ENCODE measurements at regions of chr9 and their contacts with region 1.

Region 1: GRCh38 chr9:113401027-113401792 is at the start of gene ALAD:
- DNase-seq: peak; percentile 99
- ATAC-seq: peak; percentile 99
- H3K4me3 Mint-ChIP-seq: peak within 1 kb of the TSS; percentile 96
- H3K27ac Mint-ChIP-seq: peak within 1 kb of the TSS; percentile 87
- H3K4me1 Mint-ChIP-seq: peaks cover 17% of the 10 kb centered on the region
- H3K27me3 Mint-ChIP-seq: no peaks in the 10 kb centered on the region
- CTCF ChIP-seq: no peak
- total RNA-seq, gene ALAD: 24.0 and 24.3 TPM in 2 replicates

Region 2: DNA sequence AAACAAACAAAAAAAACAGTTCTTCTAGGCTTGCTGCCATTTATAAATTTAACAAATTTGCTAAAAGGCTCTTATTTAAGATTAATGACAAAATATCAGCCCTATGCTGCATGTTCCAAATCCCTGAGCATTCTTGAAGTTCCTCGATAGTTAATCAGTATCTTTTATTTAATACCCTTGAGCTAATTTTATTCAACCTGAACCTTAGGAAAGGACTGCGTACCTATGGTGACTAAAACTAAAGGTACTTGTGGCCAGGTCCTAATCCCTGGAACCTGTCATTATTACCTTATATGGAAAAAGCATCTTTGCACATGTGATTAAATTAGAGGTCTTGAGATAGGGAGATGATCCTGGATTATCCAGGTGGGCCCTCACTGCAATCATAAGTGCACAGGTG is 672.8 kb before region 1 on chr9:
- CTCF ChIA-PET with region 1: no interaction called
- POLR2A ChIA-PET with region 1: interaction called, 11 read pairs
- intact Hi-C with region 1: no loop called
- DNase-seq: no peak
- ATAC-seq: no peak
- H3K4me3 Mint-ChIP-seq: no peak overlapping the region
- H3K27ac Mint-ChIP-seq: no peak overlapping the region
- H3K4me1 Mint-ChIP-seq: peaks cover 22% of the 10 kb centered on the region
- H3K27me3 Mint-ChIP-seq: no peaks in the 10 kb centered on the region
- CTCF ChIP-seq: no peak

Region 3: GRCh38 chr9:112945620-112946208 is 455.5 kb before region 1 on chr9:
- CTCF ChIA-PET with region 1: no interaction called
- POLR2A ChIA-PET with region 1: no interaction called
- intact Hi-C with region 1: no loop called
- DNase-seq: no peak
- ATAC-seq: no peak
- H3K4me3 Mint-ChIP-seq: no peak overlapping the region
- H3K27ac Mint-ChIP-seq: no peak overlapping the region
- H3K4me1 Mint-ChIP-seq: no peaks in the 10 kb centered on the region
- H3K27me3 Mint-ChIP-seq: peaks cover 17% of the 10 kb centered on the region
- CTCF ChIP-seq: no peak

Region 4: GRCh38 chr9:113150670-113151611 is 250.3 kb before region 1 on chr9 and contains the start of gene SLC31A2:
- CTCF ChIA-PET with region 1: no interaction called
- POLR2A ChIA-PET with region 1: no interaction called
- intact Hi-C with region 1: loop called (anchors 10 kb)
- DNase-seq: peak; percentile 80
- ATAC-seq: peak; percentile 94
- H3K4me3 Mint-ChIP-seq: peak within 1 kb of the TSS; percentile 84
- H3K27ac Mint-ChIP-seq: no peak within 1 kb of the TSS
- H3K4me1 Mint-ChIP-seq: peaks cover 13% of the 10 kb centered on the region
- H3K27me3 Mint-ChIP-seq: peaks cover 2% of the 10 kb centered on the region
- CTCF ChIP-seq: no peak
- total RNA-seq, gene SLC31A2: 0.93 and 1.1 TPM in 2 replicates

Region 5: DNA sequence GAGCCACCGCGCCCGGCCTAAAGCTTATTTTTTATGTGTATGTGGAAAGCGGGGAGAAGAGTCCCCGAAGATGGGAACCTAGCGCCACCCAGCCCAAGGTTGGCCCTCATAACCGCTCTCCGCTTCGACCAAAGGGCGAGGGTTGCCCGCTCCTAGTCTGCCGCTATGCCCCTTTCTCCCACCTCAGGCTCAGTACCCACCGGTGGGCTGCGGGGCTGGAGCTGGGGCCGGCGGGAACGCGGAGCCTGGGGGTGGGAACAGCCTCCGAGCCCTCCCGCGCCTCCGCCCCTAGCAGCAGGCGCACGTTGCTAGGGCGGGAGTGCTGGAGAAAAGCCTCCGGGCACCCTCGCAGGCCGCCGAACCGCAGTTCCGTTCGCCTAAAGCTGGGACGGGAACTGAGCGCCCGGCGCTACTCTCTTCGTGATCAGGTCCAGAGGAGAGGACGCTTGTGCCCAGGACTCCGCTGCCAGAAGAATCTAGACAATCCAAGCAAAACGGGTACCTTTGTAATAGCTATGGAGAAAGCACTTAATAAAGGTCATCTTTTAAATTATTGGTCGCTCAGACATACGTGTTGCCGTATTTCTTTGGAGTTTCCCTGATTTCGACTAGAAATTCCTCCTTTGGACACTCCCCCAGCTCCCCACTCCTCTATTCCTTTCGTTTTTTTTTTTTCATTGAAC is 61.1 kb before region 1 on chr9 and contains the start of gene WDR31:
- CTCF ChIA-PET with region 1: no interaction called
- POLR2A ChIA-PET with region 1: interaction called, 6 read pairs
- intact Hi-C with region 1: loop called (anchors 1 kb)
- DNase-seq: peak; percentile 78
- ATAC-seq: peak; percentile 98
- H3K4me3 Mint-ChIP-seq: peak within 1 kb of the TSS; percentile 84
- H3K27ac Mint-ChIP-seq: peak within 1 kb of the TSS; percentile 74
- H3K4me1 Mint-ChIP-seq: peaks cover 11% of the 10 kb centered on the region
- H3K27me3 Mint-ChIP-seq: peaks cover 3% of the 10 kb centered on the region
- CTCF ChIP-seq: no peak
- total RNA-seq, gene WDR31: 0.73 and 1.6 TPM in 2 replicates

Region 6: DNA sequence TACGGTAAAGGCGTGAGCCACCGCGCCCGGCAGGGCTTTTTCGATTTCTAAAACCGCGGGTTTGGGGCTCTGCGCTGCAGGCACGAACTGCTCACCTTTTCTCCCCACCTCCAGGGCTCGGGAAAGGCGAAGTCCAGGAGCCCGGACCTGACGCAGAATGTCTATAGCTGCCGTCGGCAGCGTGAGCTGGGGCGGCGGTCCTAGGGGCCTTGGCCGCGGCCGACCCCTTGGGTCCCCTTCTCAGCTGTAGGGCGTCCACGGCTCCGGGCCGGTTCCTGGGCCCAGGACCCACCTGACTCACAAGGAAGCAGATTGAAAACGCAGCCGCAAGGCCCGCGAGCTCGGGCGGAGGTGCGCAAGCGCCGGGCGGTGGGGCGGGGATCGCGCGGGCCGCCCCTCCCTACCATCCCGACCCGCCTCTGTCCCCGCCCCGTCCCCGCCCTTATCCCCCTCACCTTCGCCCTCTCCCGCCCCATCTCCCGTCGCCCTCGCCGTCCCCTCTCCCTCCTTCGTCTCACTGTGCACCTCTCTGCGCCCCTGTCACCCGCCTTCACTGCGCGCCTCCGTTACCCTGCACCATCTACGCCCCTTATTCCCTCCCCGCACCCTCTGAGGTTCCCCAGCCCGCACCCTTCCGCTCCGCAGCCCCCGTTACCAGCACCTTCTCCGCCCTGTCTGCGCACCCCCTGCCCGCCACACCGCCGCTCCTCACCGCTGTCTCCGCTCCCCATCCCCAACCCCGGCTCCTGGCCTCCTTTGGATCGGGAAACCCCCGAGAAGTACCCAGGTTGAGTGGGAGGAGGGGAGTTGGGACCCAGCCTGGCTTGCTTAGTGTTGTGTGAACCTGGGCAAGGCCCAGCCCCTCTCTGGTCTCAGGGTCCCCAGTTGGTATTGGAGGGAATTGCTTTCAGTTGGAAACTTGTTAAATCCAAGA is 24.3 kb before region 1 on chr9 and contains the start of gene HDHD3:
- CTCF ChIA-PET with region 1: interaction called, 3 read pairs
- POLR2A ChIA-PET with region 1: interaction called, 16 read pairs
- intact Hi-C with region 1: loop called (anchors 1 kb)
- DNase-seq: peak; percentile 78
- ATAC-seq: peak; percentile 90
- H3K4me3 Mint-ChIP-seq: peak within 1 kb of the TSS; percentile 92
- H3K27ac Mint-ChIP-seq: peak within 1 kb of the TSS; percentile 81
- H3K4me1 Mint-ChIP-seq: peaks cover 32% of the 10 kb centered on the region
- H3K27me3 Mint-ChIP-seq: no peaks in the 10 kb centered on the region
- CTCF ChIP-seq: no peak
- total RNA-seq, gene HDHD3: 23.4 and 23.9 TPM in 2 replicates

Region 7: GRCh38 chr9:113416149-113416721 is 15.0 kb after region 1 on chr9:
- CTCF ChIA-PET with region 1: no interaction called
- POLR2A ChIA-PET with region 1: interaction called, 61 read pairs
- intact Hi-C with region 1: loop called (anchors 2 kb)
- DNase-seq: no peak
- ATAC-seq: peak; percentile 99
- H3K4me3 Mint-ChIP-seq: no peak overlapping the region
- H3K27ac Mint-ChIP-seq: no peak overlapping the region
- H3K4me1 Mint-ChIP-seq: peaks cover 4% of the 10 kb centered on the region
- H3K27me3 Mint-ChIP-seq: no peaks in the 10 kb centered on the region
- CTCF ChIP-seq: no peak

Region 8: DNA sequence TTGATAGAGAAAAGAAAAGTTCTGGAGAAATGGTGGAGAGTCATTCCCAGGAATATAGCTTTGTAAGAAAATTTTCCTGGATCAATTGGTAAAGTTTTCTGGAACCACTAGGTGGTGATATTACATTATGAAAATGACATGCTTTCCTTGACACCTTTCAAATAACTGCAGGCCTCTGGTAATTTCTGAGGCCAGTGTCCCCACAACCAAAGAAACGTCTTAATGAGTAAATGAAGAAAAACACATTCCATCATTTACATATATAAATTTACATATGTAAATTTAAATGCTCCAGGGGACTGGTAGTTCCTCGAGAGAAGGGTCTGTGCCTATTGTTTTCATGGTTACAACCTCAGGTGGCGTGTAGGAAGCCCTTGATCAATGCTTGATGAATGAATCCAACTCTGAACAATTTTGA is 45.1 kb after region 1 on chr9:
- CTCF ChIA-PET with region 1: interaction called, 6 read pairs
- POLR2A ChIA-PET with region 1: no interaction called
- intact Hi-C with region 1: loop called (anchors 2 kb)
- DNase-seq: no peak
- ATAC-seq: peak; percentile 31
- H3K4me3 Mint-ChIP-seq: no peak overlapping the region
- H3K27ac Mint-ChIP-seq: no peak overlapping the region
- H3K4me1 Mint-ChIP-seq: no peaks in the 10 kb centered on the region
- H3K27me3 Mint-ChIP-seq: no peaks in the 10 kb centered on the region
- CTCF ChIP-seq: no peak

Region 9: DNA sequence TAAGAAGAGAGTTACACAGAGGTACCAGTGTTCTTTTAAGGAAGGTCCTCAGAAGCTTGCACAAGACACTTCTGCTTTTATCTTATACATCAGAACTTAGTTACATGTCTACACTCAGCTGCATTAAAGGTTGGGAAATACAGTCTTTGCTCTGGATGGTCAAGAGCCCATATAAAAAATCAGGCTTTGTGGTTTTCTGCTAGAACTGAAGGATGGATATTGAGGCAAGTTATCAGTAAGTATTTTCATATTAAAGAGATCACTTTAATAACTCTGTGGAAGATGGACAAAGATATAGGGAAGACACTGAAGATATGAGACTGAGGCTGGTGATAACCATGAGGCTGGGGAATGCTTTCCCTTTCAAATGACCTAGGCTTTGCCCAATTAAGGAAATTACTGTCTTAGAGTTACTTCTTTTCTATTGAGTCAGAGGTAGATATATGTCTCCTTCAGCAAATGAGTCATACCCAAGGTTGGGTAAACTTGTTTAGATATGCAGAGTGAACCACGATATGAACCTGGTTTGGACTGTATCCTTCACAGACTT is 1803.8 kb after region 1 on chr9:
- CTCF ChIA-PET with region 1: no interaction called
- POLR2A ChIA-PET with region 1: no interaction called
- intact Hi-C with region 1: no loop called
- DNase-seq: no peak
- ATAC-seq: peak; percentile 62
- H3K4me3 Mint-ChIP-seq: no peak overlapping the region
- H3K27ac Mint-ChIP-seq: peak overlapping the region; percentile 61
- H3K4me1 Mint-ChIP-seq: peaks cover 48% of the 10 kb centered on the region
- H3K27me3 Mint-ChIP-seq: no peaks in the 10 kb centered on the region
- CTCF ChIP-seq: no peak